ENCODE measurements at regions of chr21 and their contacts with region 1.

Region 1: GRCh38 chr21:32403201-32403777 is 9.2 kb upstream of the EVA1C start:
- DNase-seq: no peak
- ATAC-seq: peak; percentile 86

Region 2: GRCh38 chr21:32426592-32427051 is 23.3 kb after region 1 on chr21:
- intact Hi-C with region 1: no loop called
- DNase-seq: no peak
- ATAC-seq: peak; percentile 75

Region 3: DNA sequence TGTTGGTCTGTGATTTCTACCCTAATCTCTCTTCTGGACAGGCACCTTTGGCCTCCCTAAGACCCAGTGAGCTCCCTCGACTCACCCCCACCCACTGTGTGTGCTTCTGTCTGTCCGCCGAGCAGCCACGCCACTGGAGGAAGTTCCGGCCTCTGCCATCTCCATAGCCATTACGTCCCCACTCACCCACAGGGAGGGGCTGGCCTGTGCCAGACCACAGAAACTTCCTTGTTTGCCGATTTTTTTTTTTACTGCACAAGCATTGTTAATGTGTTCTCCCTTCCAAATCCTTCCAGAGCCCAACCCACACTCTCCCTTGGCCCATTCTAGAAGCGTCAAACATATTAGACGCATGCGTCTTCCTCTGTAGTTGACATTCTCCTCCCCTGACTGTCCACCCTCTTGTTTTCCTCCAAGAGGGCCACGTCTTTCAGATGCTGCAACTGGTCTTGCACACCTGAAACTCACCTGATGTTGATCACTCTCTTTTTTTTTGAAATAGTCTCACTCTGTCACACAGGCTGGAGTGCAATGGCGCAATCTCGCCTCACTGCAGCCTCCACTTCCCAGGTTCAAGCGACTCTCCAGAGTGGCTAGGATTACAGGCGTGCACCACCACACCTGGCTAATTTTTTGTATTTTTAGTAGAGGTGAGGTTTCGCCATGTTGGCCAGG is 81.6 kb after region 1 on chr21:
- intact Hi-C with region 1: no loop called
- DNase-seq: peak; percentile 75
- ATAC-seq: peak; percentile 80

Region 4: DNA sequence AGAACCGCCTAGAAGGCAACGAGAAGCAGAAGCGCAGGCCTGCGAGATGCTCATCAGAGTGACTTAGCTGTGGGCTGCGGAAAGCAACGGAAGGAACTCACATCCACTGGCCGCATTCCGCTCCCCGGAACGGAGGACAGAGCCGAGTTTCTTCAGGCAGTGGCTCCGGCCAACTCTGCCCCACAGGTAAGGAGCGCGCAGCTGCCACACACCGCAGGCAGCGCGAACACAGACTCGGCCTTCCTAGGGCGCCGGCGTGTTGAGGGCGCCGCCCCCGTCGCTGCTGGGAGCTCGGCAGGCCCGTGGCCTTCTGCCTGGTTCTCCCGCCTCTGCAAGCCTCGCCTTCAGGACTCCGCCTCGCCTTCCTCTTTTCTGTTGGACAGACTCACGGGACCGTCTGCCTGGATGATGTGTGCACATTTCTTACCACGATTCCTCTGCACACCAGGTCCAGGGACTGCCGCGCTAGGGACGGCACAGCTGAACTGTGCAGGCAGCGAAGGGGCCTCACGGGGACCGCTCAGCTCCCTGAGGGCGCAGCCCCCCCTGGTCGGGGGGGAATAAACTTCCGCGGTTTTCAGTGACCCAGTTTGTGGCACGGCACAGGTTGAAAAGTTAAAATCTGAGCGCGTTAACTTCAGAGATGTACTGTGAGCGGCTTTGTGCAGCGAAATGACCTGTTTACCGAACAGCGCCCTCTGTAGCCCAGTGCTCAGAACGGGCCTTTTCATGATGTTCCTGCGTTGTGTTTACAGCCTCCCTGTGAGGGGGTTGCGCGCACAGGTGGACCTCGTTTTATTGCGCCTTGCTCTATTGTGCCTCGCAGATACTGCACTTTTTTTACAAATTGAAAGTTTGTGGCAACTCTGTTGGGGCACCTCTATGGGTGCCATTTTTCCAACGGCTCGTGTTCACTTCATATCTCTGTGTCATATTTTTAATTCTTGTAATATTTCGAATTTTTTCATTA is 166.3 kb after region 1 on chr21:
- intact Hi-C with region 1: loop called (anchors 10 kb)
- DNase-seq: peak; percentile 88
- ATAC-seq: peak; percentile 93

Region 5: GRCh38 chr21:32597205-32597604 is 193.9 kb after region 1 on chr21:
- intact Hi-C with region 1: loop called (anchors 10 kb)
- DNase-seq: no peak
- ATAC-seq: no peak